ENCODE measurements at regions of chr17 and their contacts with region 1.

Region 1: DNA sequence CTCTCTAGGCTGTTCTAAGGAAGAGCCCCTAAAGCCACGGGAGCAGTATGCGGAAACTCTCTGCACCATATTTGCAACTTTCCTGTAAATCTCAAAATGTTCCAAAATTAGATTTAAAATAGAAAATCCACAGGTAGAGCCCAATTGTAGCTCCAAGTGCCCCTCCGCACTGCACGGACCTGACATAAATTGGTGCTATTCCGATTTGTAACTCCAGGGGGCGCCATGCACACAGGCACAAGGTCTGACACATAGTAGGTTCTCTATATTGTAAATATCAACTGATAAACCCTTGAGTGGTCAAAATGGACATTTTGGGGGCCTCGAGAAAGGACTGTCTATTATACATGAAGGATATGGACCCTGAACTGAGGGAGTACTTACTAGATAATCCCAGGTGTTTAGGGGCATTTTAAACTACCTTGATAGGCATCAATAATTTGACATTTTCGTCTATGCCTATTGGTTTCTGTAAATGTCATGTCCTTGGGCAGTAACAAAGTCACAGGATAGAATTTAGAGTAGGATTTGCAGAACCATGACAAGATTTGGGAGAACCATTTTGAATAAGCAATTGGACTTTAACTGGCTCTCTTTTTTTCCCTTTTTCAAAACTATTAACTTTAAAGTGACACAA is 36.6 kb upstream of the TMEM132E start:
- DNase-seq: no peak
- ATAC-seq: no peak
- H3K4me3 ChIP-seq: no peak overlapping the region
- H3K27ac ChIP-seq: no peak overlapping the region
- H3K4me1 ChIP-seq: no peaks in the 10 kb centered on the region
- H3K27me3 ChIP-seq: no peaks in the 10 kb centered on the region
- CTCF ChIP-seq: peak; percentile 59 to 78 (median 71)
- POLR2A ChIP-seq: no peak

Region 2: GRCh38 chr17:34637548-34638525 is 95.0 kb after region 1 on chr17:
- in situ Hi-C with region 1: no loop called
- intact Hi-C with region 1: loop called (anchors 2 kb)
- DNase-seq: peak; percentile 44 to 48
- ATAC-seq: peak; percentile 87 to 89
- H3K4me3 ChIP-seq: peak overlapping the region; percentile 32 to 58 (median 47)
- H3K27ac ChIP-seq: no peak overlapping the region
- H3K4me1 ChIP-seq: no peaks in the 10 kb centered on the region
- H3K27me3 ChIP-seq: peaks cover 0 to 6% (median 0%) of the 10 kb centered on the region in 3 donors
- CTCF ChIP-seq: peak; percentile 50 to 80 (median 67)
- POLR2A ChIP-seq: no peak

Region 3: GRCh38 chr17:34703533-34703932 is 160.7 kb after region 1 on chr17:
- in situ Hi-C with region 1: loop called in 1 of 4 experiments (anchors 25 kb)
- intact Hi-C with region 1: no loop called
- DNase-seq: no peak
- ATAC-seq: no peak
- H3K4me3 ChIP-seq: no peak overlapping the region
- H3K27ac ChIP-seq: no peak overlapping the region
- H3K4me1 ChIP-seq: no peaks in the 10 kb centered on the region
- H3K27me3 ChIP-seq: no peaks in the 10 kb centered on the region
- CTCF ChIP-seq: no peak
- POLR2A ChIP-seq: no peak

Region 4: GRCh38 chr17:34961093-34961911 is 418.5 kb after region 1 on chr17 and contains the starts of genes CCT6B and ZNF830:
- in situ Hi-C with region 1: loop called in 1 of 4 experiments (anchors 25 kb)
- intact Hi-C with region 1: no loop called
- DNase-seq: peak; percentile 86 to 89
- ATAC-seq: peak; percentile 99 to 100
- H3K4me3 ChIP-seq: peak within 1 kb of the TSS; percentile 77 to 97 (median 92)
- H3K27ac ChIP-seq: peak within 1 kb of the TSS; percentile 90 to 98 (median 93)
- H3K4me1 ChIP-seq: peaks cover 23 to 26% of the 10 kb centered on the region in 2 donors
- H3K27me3 ChIP-seq: no peaks in the 10 kb centered on the region
- CTCF ChIP-seq: no peak
- POLR2A ChIP-seq: peak; percentile 51 to 60
- total RNA-seq, gene CCT6B: 1.4 to 5.4 (median 2.8) TPM
- total RNA-seq, gene ZNF830: 6.0 to 11.0 (median 7.2) TPM

Measured in gastrocnemius medialis (tissue), 4 donors.